ENCODE measurements at regions of chr15 and their contacts with region 1.

Region 1: DNA sequence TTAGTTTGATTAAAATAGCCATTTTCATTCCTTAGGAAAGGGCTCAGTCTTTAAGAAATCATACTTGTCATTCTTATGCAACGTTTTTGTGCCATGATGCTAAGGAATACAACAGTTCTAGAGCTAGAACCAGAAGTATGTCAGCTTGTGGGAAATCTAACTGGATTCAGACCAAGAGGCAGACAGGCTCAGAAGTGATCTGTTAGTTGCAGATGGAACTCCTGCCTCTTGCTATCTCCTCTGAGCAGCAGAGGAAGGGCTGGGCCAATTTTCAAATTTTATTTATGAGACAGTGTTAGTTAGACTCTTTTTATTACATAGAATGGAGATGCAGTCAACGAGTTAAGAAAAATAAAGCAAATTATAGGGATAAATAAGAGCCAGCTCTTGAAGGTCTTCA is 48.5 kb upstream of the RYR3 start:
- DNase-seq: no peak
- ATAC-seq: no peak
- H3K4me3 ChIP-seq: no peak overlapping the region
- H3K4me3 Mint-ChIP-seq: no peak overlapping the region
- H3K27ac ChIP-seq: no peak overlapping the region
- H3K27ac Mint-ChIP-seq: no peak overlapping the region
- H3K4me1 ChIP-seq: no peaks in the 10 kb centered on the region
- H3K4me1 Mint-ChIP-seq: no peaks in the 10 kb centered on the region
- H3K27me3 ChIP-seq: no peaks in the 10 kb centered on the region
- H3K27me3 Mint-ChIP-seq: no peaks in the 10 kb centered on the region

Region 2: GRCh38 chr15:33236841-33237509 is 25.3 kb before region 1 on chr15:
- CTCF ChIA-PET with region 1: no interaction called
- POLR2A ChIA-PET with region 1: interaction called in 1 of 2 experiments, 10 read pairs
- DNase-seq: no peak
- ATAC-seq: no peak
- H3K4me3 ChIP-seq: no peak overlapping the region
- H3K4me3 Mint-ChIP-seq: no peak overlapping the region
- H3K27ac ChIP-seq: no peak overlapping the region
- H3K27ac Mint-ChIP-seq: no peak overlapping the region
- H3K4me1 ChIP-seq: no peaks in the 10 kb centered on the region
- H3K4me1 Mint-ChIP-seq: peaks cover 0 to 3% (median 0%) of the 10 kb centered on the region in 3 donors
- H3K27me3 ChIP-seq: peaks cover 3% of the 10 kb centered on the region in 2 experiments
- H3K27me3 Mint-ChIP-seq: peaks cover 24 to 28% of the 10 kb centered on the region in 2 donors

Region 3: GRCh38 chr15:33251362-33251761 is 10.9 kb before region 1 on chr15:
- CTCF ChIA-PET with region 1: no interaction called
- POLR2A ChIA-PET with region 1: no interaction called
- DNase-seq: no peak
- ATAC-seq: no peak
- H3K4me3 ChIP-seq: no peak overlapping the region
- H3K4me3 Mint-ChIP-seq: no peak overlapping the region
- H3K27ac ChIP-seq: no peak overlapping the region
- H3K27ac Mint-ChIP-seq: no peak overlapping the region
- H3K4me1 ChIP-seq: no peaks in the 10 kb centered on the region
- H3K4me1 Mint-ChIP-seq: no peaks in the 10 kb centered on the region
- H3K27me3 ChIP-seq: peaks cover 0 to 11% of the 10 kb centered on the region in 2 experiments
- H3K27me3 Mint-ChIP-seq: peaks cover 10 to 15% of the 10 kb centered on the region in 2 donors

Measured in T-cell (primary cell).